AG04449 (cell line): ENCODE measurements at regions of chr5 and their contacts with region 1.

Region 1: DNA sequence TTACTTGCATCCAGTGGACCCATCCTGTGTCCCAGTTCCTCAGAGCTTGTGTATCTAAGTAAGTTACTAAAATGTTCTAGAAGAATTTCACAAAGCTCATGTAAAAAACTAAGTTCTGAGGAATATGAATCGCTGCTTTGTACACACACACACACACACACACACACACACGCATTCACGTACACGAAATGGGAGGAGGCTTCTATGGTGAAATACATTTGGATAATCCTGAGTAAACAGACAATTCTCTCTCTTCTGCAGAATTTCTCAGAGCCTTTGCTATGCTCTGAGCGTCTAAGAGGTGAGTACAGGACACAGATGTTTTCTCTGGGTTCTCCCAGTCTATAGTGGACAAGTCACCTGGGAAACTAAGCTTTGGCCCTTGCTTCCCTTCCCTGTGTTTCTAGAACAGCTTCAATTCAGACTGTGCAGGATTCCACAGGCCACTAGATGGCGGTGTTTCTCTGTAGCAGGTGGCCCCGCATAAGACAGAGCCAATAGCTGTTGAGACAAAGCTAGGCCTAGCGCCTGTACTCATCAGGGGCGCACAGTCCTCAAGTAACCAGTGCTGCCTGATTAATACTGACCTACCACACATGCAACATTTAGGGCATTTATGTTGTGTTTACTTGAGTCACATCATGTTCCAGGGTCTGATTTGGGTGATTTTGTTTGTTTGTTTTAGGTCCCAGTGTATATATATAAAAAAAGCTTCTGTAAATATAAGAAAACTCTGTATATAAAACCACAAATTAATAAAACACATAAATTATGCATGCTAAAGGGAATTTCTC is 114.8 kb downstream of the LIFR start:
- DNase-seq: no peak
- H3K4me3 ChIP-seq: no peak overlapping the region
- CTCF ChIP-seq: peak; percentile 91

Region 2: DNA sequence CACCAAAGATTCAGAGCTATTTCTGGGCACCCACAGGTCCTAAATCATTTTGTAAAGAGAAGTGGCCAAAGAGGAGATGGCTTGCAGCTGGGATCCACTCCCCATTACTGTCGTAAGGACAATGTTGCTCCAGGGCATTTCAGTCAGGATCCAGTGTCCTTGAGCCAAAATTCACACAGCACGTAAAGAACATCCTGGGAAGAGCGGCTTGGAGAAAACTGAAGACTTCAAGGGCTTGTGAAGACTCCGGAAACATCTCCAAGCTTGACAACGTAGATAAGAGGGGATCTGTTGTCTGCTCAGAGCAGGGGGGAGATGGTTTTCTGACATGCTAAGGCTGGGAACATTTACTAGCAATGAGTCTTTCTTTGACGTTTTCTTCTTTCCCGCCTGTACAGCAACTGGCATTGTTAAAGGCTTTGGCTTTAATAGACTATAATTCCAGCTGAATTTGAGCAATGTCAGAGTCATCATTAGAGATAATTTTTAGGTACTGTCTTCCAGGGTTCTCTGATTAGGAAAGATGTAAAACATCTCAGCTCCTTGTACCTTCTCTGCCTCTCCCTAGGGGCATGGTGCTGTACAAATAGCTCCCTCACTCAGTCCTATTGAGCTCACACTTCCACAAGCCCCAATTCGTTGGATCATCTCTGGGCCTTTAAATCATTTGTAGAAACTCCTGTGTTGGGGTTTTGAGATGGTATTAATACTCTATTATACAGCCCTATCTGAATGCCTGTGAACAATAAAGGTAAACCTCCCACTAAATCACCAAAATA is 143.6 kb before region 1 on chr5:
- CTCF ChIA-PET with region 1: no interaction called
- POLR2A ChIA-PET with region 1: no interaction called
- DNase-seq: no peak
- H3K4me3 ChIP-seq: no peak overlapping the region
- CTCF ChIP-seq: no peak

Region 3: GRCh38 chr5:38382898-38383297 is 58.8 kb before region 1 on chr5:
- CTCF ChIA-PET with region 1: interaction called, 37 read pairs
- POLR2A ChIA-PET with region 1: no interaction called
- DNase-seq: no peak
- H3K4me3 ChIP-seq: no peak overlapping the region
- CTCF ChIP-seq: peak; percentile 89

Region 4: GRCh38 chr5:38463634-38464521 is 22.2 kb after region 1 on chr5:
- CTCF ChIA-PET with region 1: interaction called, 38 read pairs
- POLR2A ChIA-PET with region 1: interaction called, 4 read pairs
- DNase-seq: peak; percentile 79
- H3K4me3 ChIP-seq: no peak overlapping the region
- CTCF ChIP-seq: no peak

Region 5: GRCh38 chr5:38551030-38552017 is 109.7 kb after region 1 on chr5:
- CTCF ChIA-PET with region 1: interaction called, 102 read pairs
- POLR2A ChIA-PET with region 1: no interaction called
- DNase-seq: no peak
- H3K4me3 ChIP-seq: no peak overlapping the region
- CTCF ChIP-seq: peak; percentile 71

Region 6: GRCh38 chr5:38672059-38672788 is 230.6 kb after region 1 on chr5:
- CTCF ChIA-PET with region 1: interaction called, 46 read pairs
- POLR2A ChIA-PET with region 1: no interaction called
- DNase-seq: peak; percentile 77
- H3K4me3 ChIP-seq: no peak overlapping the region
- CTCF ChIP-seq: no peak

Region 7: DNA sequence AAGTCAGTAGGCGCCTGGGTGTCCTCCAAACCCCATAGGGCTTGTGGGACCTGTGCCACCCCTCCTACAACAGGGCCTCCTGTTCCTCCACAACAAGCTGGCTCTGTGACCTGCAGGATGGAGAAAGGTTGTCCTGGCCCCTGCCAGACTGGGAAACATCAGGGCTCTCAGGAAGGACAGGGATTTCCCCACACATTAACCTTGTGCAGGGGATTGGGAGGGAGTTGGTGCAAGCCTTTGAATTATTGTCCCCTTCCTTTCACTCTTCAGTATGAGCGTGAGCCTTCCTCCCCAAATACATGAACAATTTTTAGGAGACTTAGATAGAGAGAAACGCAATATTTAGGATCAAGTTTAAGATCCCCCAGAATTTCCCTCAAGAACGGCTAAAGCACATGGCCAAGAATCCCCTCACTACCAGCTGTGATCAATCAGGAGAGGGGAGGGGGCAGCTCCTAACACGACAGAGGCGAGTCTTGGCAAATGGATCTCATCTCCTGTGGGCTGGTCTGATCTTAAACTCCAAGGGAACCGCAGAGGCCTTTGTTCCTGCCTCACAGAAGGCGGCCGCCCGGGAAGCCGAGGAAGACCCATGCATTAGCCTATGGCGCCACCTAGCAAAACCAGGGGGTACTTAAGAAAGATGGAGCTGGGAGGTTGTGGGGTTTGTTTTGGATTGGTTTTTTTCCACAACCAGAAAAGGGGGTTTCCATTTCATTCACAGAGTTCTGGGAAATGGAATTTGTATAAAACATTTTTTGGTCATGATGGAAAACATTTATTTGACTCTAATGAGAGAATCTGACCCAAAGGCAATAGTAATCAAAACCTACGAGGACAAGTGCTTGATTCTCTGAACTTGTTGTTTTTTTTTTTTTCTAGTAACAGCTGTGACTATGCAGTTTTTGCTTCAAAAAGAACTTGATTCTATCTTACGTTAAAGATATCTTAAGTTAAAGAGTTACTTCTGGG is 368.0 kb after region 1 on chr5:
- CTCF ChIA-PET with region 1: interaction called, 304 read pairs
- POLR2A ChIA-PET with region 1: interaction called, 13 read pairs
- DNase-seq: peak; percentile 60
- H3K4me3 ChIP-seq: no peak overlapping the region
- CTCF ChIP-seq: peak; percentile 88